ENCODE measurements at regions of chr3 and their contacts with region 1.

Region 1: GRCh38 chr3:133384331-133385027 is 15.4 kb upstream of the BFSP2 start:
- ATAC-seq: peak; percentile 91 to 100 (median 100)
- H3K4me3 ChIP-seq: no peak overlapping the region
- H3K27ac ChIP-seq: no peak overlapping the region
- H3K4me1 ChIP-seq: peaks cover 2 to 4% of the 10 kb centered on the region in 2 donors

Region 2: DNA sequence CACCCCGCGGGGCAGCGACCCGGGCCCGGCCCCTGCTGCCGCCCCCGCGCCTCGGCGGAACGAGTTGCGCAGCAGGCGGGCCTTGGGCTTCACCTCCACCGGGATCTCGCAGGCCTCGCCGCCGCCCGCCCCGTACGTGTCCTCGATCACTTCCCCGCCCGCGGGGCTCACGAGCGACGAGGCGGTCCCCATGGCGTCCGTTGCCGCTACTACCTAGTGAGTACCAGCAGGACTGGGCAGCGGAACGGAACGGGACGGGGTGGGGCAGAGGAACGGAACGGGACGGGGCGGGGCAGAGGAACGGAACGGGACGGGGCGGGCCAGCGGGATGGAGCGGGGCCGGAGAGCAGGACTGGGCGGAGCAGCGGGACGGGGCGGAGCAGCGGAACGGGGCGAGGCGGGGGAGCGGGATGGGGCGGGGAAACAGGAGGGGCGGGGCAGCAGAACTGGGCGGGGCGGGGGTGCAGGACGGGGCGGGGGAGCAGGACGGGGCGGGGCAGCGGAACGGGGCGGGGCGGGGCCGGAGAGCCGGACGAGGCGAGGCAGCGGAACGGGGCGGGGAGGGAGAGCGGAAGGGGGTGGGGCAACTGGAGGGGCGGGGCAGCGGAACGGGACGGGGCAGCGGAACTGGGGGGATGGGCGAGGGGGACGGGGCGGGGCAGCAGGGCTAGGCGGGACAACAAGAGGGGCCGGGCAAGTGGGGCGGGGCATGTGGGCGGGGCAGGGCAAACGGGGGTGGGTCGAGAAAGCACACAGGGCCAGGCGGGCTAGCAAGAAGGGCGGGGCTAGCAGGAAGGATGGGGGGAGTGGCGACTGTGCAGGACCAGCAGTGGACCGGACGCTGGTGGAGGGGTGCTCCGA is 662.1 kb before region 1 on chr3 and contains the start of gene NPHP3:
- in situ Hi-C with region 1: loop called in 8 of 9 experiments (anchors 10 to 25 kb)
- ATAC-seq: peak; percentile 80 to 93 (median 90)
- H3K4me3 ChIP-seq: peak within 1 kb of the TSS; percentile 52 to 99 (median 97)
- H3K27ac ChIP-seq: peak within 1 kb of the TSS; percentile 76 to 89
- H3K4me1 ChIP-seq: peaks cover 14% of the 10 kb centered on the region in 2 donors
- total RNA-seq, gene NPHP3: 8.2 to 42.9 (median 16.7) TPM

Region 3: GRCh38 chr3:132730891-132731580 is 653.4 kb before region 1 on chr3:
- in situ Hi-C with region 1: loop called (anchors 10 to 25 kb)
- ATAC-seq: peak; percentile 60 to 96 (median 82)
- H3K4me3 ChIP-seq: no peak overlapping the region
- H3K27ac ChIP-seq: no peak overlapping the region
- H3K4me1 ChIP-seq: no peaks in the 10 kb centered on the region

Region 4: GRCh38 chr3:132911736-132912414 is 472.6 kb before region 1 on chr3:
- in situ Hi-C with region 1: loop called in 1 of 9 experiments (anchors 25 kb)
- ATAC-seq: peak in 1 of 8 experiments; percentile 40
- H3K4me3 ChIP-seq: no peak overlapping the region
- H3K27ac ChIP-seq: no peak overlapping the region
- H3K4me1 ChIP-seq: no peaks in the 10 kb centered on the region

Region 5: GRCh38 chr3:133040696-133041523 is 343.6 kb before region 1 on chr3:
- in situ Hi-C with region 1: loop called in 6 of 9 experiments (anchors 5 to 25 kb)
- ATAC-seq: peak; percentile 43 to 92 (median 56)
- H3K4me3 ChIP-seq: peak overlapping the region in 1 of 5 donors; percentile 2
- H3K27ac ChIP-seq: no peak overlapping the region
- H3K4me1 ChIP-seq: peaks cover 3 to 15% of the 10 kb centered on the region in 2 donors

Region 6: DNA sequence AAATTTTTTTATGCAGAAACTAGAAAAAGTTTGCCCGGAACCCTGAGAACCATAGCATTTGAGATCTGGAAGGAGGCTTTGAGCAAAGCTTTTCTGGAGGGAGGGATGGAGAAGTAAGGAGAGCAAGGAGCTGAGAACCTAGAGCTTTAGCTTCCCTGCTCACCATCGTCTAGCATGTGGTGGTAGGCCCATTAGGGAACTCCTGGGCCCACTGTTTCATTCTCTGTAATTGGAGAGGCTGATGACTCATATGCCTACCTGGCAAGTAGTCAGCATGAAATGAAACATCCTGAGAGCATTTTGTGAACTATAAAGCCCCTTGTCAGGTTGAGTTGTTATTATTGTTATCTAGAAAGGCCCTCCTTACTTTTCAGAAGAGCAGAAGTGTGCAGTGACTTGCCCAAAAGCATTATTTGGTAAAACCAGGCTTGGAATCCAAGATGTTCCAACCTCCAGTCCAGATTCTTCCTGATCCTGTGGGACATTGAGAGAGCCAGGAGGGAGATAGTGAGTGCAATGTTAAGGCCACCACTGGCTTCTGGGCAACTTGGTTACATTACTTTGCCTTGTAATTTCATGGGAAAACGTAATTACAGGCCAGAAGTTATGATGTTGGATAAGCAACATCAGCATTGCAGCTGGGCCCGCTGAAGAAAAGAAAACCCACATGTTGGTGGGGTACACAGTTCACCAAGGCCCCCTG is 89.1 kb before region 1 on chr3:
- in situ Hi-C with region 1: no loop called
- ATAC-seq: no peak
- H3K4me3 ChIP-seq: no peak overlapping the region
- H3K27ac ChIP-seq: no peak overlapping the region
- H3K4me1 ChIP-seq: peaks cover 2 to 5% of the 10 kb centered on the region in 2 donors

Region 7: DNA sequence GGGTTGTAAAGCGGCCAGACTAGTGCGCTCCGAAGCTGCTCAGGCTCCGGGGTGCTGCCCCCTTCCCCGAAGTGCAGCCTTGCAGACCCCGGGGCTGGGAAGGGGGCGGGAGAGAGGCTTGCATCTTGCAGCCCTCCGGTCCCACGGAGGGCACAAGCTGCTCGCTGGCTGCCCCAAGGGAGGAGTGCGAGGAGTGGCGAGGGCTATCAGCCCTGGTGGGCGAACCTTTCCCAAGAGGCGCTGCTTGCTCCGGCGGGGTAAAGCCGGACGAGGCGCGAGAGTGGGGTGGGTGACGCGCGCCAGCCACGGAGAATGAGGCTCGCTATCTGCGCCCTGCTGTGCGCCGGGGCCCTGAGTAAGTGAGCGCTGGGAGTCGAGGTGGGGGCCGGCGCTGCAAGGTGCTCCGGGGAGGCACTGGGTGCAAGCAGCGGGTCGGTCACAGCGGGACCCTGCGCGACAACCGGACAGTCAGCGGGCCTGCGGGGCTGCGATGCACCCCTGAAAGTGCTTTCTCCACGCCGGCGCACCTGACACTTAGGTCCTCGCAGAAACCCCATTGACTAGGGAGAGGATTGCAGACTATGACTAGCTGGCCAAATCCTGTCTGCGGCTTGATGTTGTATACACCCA is 289.9 kb after region 1 on chr3:
- in situ Hi-C with region 1: no loop called
- ATAC-seq: peak in 7 of 8 experiments; percentile 38 to 93 (median 81)
- H3K4me3 ChIP-seq: peak overlapping the region; percentile 21 to 37 (median 29)
- H3K27ac ChIP-seq: no peak overlapping the region
- H3K4me1 ChIP-seq: peaks cover 0 to 2% of the 10 kb centered on the region in 2 donors

Measured in motor neuron (in vitro differentiated cells).